CD8-positive, alpha-beta T cell (primary cell): ENCODE measurements at regions of chr22 and their contacts with region 1.

Region 1: GRCh38 chr22:31290494-31291471 is 1.5 kb downstream of the PIK3IP1 start:
- DNase-seq: peak; percentile 92 to 99 (median 95)
- ATAC-seq: peak; percentile 72
- H3K4me3 ChIP-seq: peak overlapping the region; percentile 97 to 99
- H3K4me3 Mint-ChIP-seq: peak overlapping the region; percentile 99
- H3K27ac ChIP-seq: peak overlapping the region; percentile 99
- H3K27ac Mint-ChIP-seq: peak overlapping the region; percentile 100
- H3K4me1 ChIP-seq: peaks cover 55% of the 10 kb centered on the region
- H3K4me1 Mint-ChIP-seq: peaks cover 65% of the 10 kb centered on the region
- H3K27me3 ChIP-seq: no peaks in the 10 kb centered on the region
- H3K27me3 Mint-ChIP-seq: no peaks in the 10 kb centered on the region
- CTCF ChIP-seq: no peak

Region 2: DNA sequence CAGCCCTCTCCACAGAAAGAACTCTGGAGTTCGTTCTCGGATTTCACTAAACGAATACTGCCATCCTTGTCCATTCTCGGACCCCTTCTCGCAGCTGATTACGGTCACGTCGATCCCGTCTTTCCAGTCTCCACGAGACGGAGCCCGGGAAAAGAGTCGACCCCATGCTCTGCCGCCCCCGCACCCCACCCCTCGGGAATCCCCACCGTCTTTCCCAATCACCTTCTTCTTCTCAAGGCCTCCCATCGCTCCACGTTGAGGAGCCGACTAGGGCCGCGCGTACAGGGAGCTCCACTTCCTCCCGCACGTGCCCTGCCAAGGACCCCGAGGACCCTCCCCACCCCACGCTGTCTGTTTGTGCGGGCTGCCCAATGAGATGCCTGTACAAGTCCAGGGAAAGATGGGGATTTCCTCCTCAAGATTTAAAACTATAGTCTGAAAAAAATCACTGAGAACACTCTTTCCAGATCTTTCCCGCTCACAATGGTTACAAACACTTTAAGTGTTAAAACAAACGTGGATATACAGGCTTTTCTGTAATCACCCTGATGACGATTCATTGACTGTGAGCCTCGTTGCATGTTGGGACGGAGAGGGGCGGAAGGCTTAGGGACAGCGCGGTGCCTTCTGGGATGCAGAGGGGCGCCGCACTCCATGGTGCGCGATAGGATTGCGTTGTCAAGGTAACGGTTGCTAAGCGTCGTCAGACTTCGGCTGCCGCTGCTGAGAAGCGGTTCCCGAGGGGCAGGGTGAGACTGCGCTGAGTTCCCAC is 699.0 kb before region 1 on chr22 and contains the start of gene PES1:
- CTCF ChIA-PET with region 1: no interaction called
- POLR2A ChIA-PET with region 1: no interaction called
- intact Hi-C with region 1: loop called in 1 of 2 experiments (anchors 5 kb)
- DNase-seq: peak; percentile 90 to 99 (median 95)
- ATAC-seq: peak; percentile 96
- H3K4me3 ChIP-seq: peak within 1 kb of the TSS; percentile 79 to 80
- H3K4me3 Mint-ChIP-seq: no peak within 1 kb of the TSS
- H3K27ac ChIP-seq: peak within 1 kb of the TSS; percentile 89 to 97
- H3K27ac Mint-ChIP-seq: no peak within 1 kb of the TSS
- H3K4me1 ChIP-seq: peaks cover 15% of the 10 kb centered on the region
- H3K4me1 Mint-ChIP-seq: no peaks in the 10 kb centered on the region
- H3K27me3 ChIP-seq: no peaks in the 10 kb centered on the region
- H3K27me3 Mint-ChIP-seq: peaks cover 13% of the 10 kb centered on the region
- CTCF ChIP-seq: no peak
- total RNA-seq, gene PES1: 39.7 to 47.0 TPM

Region 3: GRCh38 chr22:31139866-31140716 is 150.7 kb before region 1 on chr22 and contains the start of gene PLA2G3:
- CTCF ChIA-PET with region 1: no interaction called
- POLR2A ChIA-PET with region 1: no interaction called
- intact Hi-C with region 1: no loop called
- DNase-seq: no peak
- ATAC-seq: no peak
- H3K4me3 ChIP-seq: no peak within 1 kb of the TSS
- H3K4me3 Mint-ChIP-seq: no peak within 1 kb of the TSS
- H3K27ac ChIP-seq: no peak within 1 kb of the TSS
- H3K27ac Mint-ChIP-seq: no peak within 1 kb of the TSS
- H3K4me1 ChIP-seq: no peaks in the 10 kb centered on the region
- H3K4me1 Mint-ChIP-seq: no peaks in the 10 kb centered on the region
- H3K27me3 ChIP-seq: no peaks in the 10 kb centered on the region
- H3K27me3 Mint-ChIP-seq: peaks cover 4% of the 10 kb centered on the region
- CTCF ChIP-seq: no peak
- total RNA-seq, gene PLA2G3: not detected

Region 4: DNA sequence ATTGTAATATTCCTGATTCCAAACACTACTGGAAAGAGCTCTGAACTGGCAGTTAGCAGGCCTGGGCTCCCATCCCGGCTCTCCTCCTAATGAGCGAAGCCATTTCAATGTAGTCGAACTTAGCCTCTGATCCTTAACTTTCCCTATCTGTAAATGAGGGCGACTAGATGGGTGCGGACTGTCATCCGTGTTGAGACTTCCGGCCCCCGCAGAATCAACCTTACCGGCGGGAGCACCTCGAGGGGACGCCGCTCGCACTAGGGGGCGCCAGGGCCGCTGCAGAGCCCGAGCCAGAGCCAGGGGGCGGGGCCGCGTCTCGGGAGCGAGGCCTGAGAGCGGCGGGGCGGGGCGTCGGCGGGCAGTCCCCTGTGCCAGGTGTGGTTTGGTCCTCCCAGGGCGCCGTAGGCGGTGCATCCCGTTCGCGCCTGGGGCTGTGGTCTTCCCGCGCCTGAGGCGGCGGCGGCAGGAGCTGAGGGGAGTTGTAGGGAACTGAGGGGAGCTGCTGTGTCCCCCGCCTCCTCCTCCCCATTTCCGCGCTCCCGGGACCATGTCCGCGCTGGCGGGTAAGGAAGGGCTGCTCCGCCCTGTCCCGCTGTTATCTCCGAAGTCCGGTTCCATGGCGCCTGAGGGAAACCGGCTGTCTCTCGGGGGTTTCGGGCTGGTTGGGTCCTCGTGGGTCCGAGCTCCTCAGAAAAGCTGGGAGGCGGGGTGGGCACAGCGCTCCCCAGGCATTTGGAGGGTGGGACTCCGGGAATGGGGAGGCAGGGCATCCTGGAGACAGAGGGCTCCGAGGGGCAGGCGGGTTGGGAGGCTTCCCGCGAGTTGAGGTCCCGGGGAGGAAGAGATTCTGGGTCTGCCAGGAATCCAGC is 78.7 kb before region 1 on chr22 and contains the start of gene LIMK2:
- CTCF ChIA-PET with region 1: interaction called, 16 read pairs
- POLR2A ChIA-PET with region 1: interaction called, 61 read pairs
- intact Hi-C with region 1: loop called (anchors 1 kb)
- DNase-seq: peak; percentile 93 to 99 (median 97)
- ATAC-seq: peak; percentile 99
- H3K4me3 ChIP-seq: peak within 1 kb of the TSS; percentile 87 to 99
- H3K4me3 Mint-ChIP-seq: peak within 1 kb of the TSS; percentile 88
- H3K27ac ChIP-seq: peak within 1 kb of the TSS; percentile 50 to 80
- H3K27ac Mint-ChIP-seq: peak within 1 kb of the TSS; percentile 92
- H3K4me1 ChIP-seq: peaks cover 30% of the 10 kb centered on the region
- H3K4me1 Mint-ChIP-seq: peaks cover 45% of the 10 kb centered on the region
- H3K27me3 ChIP-seq: no peaks in the 10 kb centered on the region
- H3K27me3 Mint-ChIP-seq: no peaks in the 10 kb centered on the region
- CTCF ChIP-seq: peak; percentile 72
- total RNA-seq, gene LIMK2: 8.4 to 9.1 TPM

Region 5: GRCh38 chr22:31278622-31279326 is 12.0 kb before region 1 on chr22:
- CTCF ChIA-PET with region 1: interaction called, 84 read pairs
- POLR2A ChIA-PET with region 1: interaction called, 608 read pairs
- intact Hi-C with region 1: loop called in 1 of 2 experiments (anchors 1 kb)
- DNase-seq: peak in 8 of 9 experiments; percentile 30 to 78 (median 64)
- ATAC-seq: peak; percentile 73
- H3K4me3 ChIP-seq: no peak overlapping the region
- H3K4me3 Mint-ChIP-seq: peak overlapping the region; percentile 73
- H3K27ac ChIP-seq: peak overlapping the region; percentile 54 to 76
- H3K27ac Mint-ChIP-seq: peak overlapping the region; percentile 94
- H3K4me1 ChIP-seq: peaks cover 93% of the 10 kb centered on the region
- H3K4me1 Mint-ChIP-seq: peaks cover 89% of the 10 kb centered on the region
- H3K27me3 ChIP-seq: no peaks in the 10 kb centered on the region
- H3K27me3 Mint-ChIP-seq: no peaks in the 10 kb centered on the region
- CTCF ChIP-seq: no peak

Region 6: DNA sequence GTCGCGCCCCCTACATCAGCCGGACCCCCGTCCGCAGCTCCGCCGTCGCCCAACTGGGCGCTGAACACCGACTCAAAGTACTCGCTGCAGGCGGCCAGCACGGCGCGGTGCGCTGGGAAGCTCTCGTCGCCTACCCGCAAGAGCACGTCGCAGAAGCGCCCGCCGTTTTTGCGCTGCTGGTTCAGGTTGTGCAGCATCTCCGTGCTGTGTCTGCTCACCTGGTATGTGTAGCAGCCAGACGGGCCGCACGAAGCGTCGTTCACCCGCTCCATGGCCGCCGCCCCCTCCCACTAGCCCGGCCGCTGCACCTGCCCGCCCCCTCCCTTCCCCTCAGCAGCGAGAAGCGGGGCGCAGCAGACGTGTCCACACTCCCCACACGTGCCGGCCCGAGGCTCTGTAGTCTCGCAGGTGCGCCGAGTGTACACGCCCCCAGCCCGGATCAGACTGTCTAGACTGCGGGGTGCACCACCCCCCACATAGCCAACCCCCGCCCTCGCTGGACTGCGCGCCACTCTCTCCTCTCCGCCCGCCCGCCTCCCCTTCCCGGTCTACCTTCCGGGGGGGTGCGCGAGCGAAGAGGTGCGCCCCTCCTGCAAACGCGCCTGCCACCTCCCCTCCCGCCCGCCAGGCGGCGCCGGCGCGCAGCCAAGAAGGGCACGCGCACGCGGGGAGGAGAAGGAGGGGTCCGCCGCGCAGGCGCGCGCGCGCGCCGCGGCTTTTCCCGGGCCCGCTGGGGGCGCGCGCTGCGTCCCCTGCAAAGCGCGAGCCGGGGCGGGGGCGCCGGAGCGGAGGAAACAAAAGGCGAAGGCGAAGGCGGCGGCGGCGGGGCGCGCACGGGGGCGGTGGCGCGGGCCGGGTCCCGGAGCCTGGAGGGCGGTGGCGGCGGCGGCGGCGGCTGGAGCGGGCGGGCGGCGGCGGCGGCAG is 54.8 kb after region 1 on chr22:
- CTCF ChIA-PET with region 1: interaction called, 4 read pairs
- POLR2A ChIA-PET with region 1: interaction called, 122 read pairs
- intact Hi-C with region 1: loop called (anchors 1 kb)
- DNase-seq: peak; percentile 78 to 97 (median 90)
- ATAC-seq: peak; percentile 77
- H3K4me3 ChIP-seq: peak overlapping the region; percentile 63 to 72
- H3K4me3 Mint-ChIP-seq: peak overlapping the region; percentile 90
- H3K27ac ChIP-seq: peak overlapping the region; percentile 51 to 70
- H3K27ac Mint-ChIP-seq: peak overlapping the region; percentile 93
- H3K4me1 ChIP-seq: peaks cover 52% of the 10 kb centered on the region
- H3K4me1 Mint-ChIP-seq: peaks cover 52% of the 10 kb centered on the region
- H3K27me3 ChIP-seq: no peaks in the 10 kb centered on the region
- H3K27me3 Mint-ChIP-seq: no peaks in the 10 kb centered on the region
- CTCF ChIP-seq: peak; percentile 82

Region 7: DNA sequence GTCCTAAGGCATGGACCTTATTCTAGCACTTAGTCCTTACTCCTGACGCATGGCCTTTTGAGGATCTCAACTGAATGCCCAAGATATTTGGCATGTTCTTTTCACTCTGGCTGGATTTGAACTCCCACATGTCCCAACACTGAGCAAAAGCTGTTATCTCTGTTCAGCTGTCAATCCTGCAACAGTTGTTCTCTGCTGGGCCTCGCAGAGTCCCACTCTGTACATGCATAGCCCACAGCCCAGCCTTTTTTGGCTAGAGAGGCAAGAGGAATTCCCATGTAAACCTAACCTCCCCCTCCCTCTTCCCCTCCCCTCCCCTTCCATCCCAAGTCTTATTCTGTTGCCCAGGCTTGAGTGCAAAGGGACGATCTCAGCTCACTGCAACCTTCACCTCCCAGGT is 86.8 kb after region 1 on chr22:
- CTCF ChIA-PET with region 1: no interaction called
- POLR2A ChIA-PET with region 1: no interaction called
- intact Hi-C with region 1: no loop called
- DNase-seq: no peak
- ATAC-seq: no peak
- H3K4me3 ChIP-seq: no peak overlapping the region
- H3K4me3 Mint-ChIP-seq: no peak overlapping the region
- H3K27ac ChIP-seq: no peak overlapping the region
- H3K27ac Mint-ChIP-seq: no peak overlapping the region
- H3K4me1 ChIP-seq: no peaks in the 10 kb centered on the region
- H3K4me1 Mint-ChIP-seq: no peaks in the 10 kb centered on the region
- H3K27me3 ChIP-seq: no peaks in the 10 kb centered on the region
- H3K27me3 Mint-ChIP-seq: no peaks in the 10 kb centered on the region
- CTCF ChIP-seq: no peak

Region 8: DNA sequence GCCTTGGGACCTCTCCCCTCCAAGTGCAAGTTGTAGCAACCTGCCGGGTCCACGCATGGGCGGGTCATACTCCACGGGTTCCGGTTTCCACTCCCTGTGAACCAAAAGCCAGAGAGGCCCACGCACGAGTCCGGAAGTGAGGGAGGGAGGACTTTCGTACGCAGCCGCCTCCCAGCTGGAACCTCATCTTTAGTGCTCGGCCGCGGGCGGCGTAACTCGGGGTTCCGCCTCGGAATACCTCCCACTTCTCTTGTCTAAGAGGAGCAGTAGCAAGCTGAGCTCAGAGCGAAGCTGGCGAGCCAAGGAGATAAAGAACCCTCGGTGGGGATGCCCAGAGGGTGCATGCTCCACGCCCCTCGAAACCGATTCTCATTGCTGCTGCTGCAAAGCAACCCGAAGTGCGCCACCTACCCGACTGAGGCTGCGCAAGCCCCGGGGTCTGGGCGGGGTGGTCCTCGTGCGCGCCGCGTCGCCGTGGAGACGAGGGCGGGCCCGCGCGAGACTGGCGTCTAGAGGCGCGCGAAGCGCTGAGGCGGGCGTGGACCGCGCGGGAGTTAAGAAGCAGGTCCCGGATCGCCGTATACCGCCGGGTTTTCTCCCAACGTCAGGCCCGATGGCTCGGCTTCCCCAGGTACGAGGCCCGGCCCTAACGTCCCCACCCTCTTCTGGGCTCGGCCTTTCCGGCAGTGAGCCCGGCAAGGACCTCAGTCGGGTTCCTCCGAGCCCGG is 205.4 kb after region 1 on chr22 and contains the start of gene SFI1:
- CTCF ChIA-PET with region 1: no interaction called
- POLR2A ChIA-PET with region 1: interaction called, 5 read pairs
- intact Hi-C with region 1: loop called (anchors 1 to 5 kb)
- DNase-seq: peak; percentile 93 to 98 (median 96)
- ATAC-seq: peak; percentile 83
- H3K4me3 ChIP-seq: peak within 1 kb of the TSS; percentile 83 to 91
- H3K4me3 Mint-ChIP-seq: peak within 1 kb of the TSS; percentile 95
- H3K27ac ChIP-seq: peak within 1 kb of the TSS; percentile 87 to 90
- H3K27ac Mint-ChIP-seq: peak within 1 kb of the TSS; percentile 99
- H3K4me1 ChIP-seq: peaks cover 27% of the 10 kb centered on the region
- H3K4me1 Mint-ChIP-seq: peaks cover 45% of the 10 kb centered on the region
- H3K27me3 ChIP-seq: no peaks in the 10 kb centered on the region
- H3K27me3 Mint-ChIP-seq: no peaks in the 10 kb centered on the region
- CTCF ChIP-seq: no peak
- total RNA-seq, gene SFI1: 217 to 235 TPM